Motor neuron (in vitro differentiated cells): ENCODE measurements at regions of chr1 and their contacts with region 1.

Region 1: DNA sequence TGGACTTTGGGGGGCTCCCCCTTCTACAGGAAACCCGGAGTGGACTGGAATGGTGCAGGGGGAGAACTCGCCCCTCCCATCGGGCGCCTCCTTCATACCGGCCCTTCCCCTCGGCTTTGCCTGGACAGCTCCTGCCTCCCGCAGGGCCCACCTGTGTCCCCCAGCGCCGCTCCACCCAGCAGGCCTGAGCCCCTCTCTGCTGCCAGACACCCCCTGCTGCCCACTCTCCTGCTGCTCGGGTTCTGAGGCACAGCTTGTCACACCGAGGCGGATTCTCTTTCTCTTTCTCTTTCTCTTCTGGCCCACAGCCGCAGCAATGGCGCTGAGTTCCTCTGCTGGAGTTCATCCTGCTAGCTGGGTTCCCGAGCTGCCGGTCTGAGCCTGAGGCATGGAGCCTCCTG is at the start of gene TNFRSF14:
- ATAC-seq: peak; percentile 6 to 72 (median 16)
- H3K4me3 ChIP-seq: no peak within 1 kb of the TSS
- H3K27ac ChIP-seq: peak within 1 kb of the TSS in 1 of 2 donors; percentile 3
- H3K4me1 ChIP-seq: peaks cover 29 to 30% of the 10 kb centered on the region in 2 donors
- total RNA-seq, gene TNFRSF14: 0.22 to 48.5 (median 3.2) TPM

Region 2: GRCh38 chr1:3431266-3431665 is 875.0 kb after region 1 on chr1:
- in situ Hi-C with region 1: loop called in 1 of 9 experiments (anchors 25 kb)
- ATAC-seq: peak in 6 of 8 experiments; percentile 41 to 73 (median 64)
- H3K4me3 ChIP-seq: no peak overlapping the region
- H3K27ac ChIP-seq: peak overlapping the region in 1 of 2 donors; percentile 7
- H3K4me1 ChIP-seq: peaks cover 0 to 18% of the 10 kb centered on the region in 2 donors